Heart left ventricle (tissue), 16 donors: ENCODE measurements at regions of chr21 and their contacts with region 1.

Region 1: GRCh38 chr21:30206551-30207251 is 9.2 kb downstream of the CLDN8 start:
- DNase-seq: no peak
- ATAC-seq: no peak
- H3K4me3 ChIP-seq: no peak overlapping the region
- H3K27ac ChIP-seq: no peak overlapping the region
- H3K4me1 ChIP-seq: peaks cover 0 to 7% (median 0%) of the 10 kb centered on the region in 12 donors
- H3K27me3 ChIP-seq: no peaks in the 10 kb centered on the region
- CTCF ChIP-seq: no peak
- POLR2A ChIP-seq: no peak

Region 2: GRCh38 chr21:30058928-30059327 is 147.8 kb before region 1 on chr21:
- intact Hi-C with region 1: loop called in 1 of 10 experiments (anchors 10 kb)
- DNase-seq: no peak
- ATAC-seq: no peak
- H3K4me3 ChIP-seq: no peak overlapping the region
- H3K27ac ChIP-seq: no peak overlapping the region
- H3K4me1 ChIP-seq: no peaks in the 10 kb centered on the region
- H3K27me3 ChIP-seq: no peaks in the 10 kb centered on the region
- CTCF ChIP-seq: no peak
- POLR2A ChIP-seq: no peak

Region 3: GRCh38 chr21:30676737-30677136 is 470.0 kb after region 1 on chr21:
- intact Hi-C with region 1: no loop called
- DNase-seq: no peak
- ATAC-seq: no peak
- H3K4me3 ChIP-seq: no peak overlapping the region
- H3K27ac ChIP-seq: no peak overlapping the region
- H3K4me1 ChIP-seq: no peaks in the 10 kb centered on the region
- H3K27me3 ChIP-seq: no peaks in the 10 kb centered on the region
- CTCF ChIP-seq: no peak
- POLR2A ChIP-seq: no peak